Activated T-helper 1 cell treated with anti-CD3 and anti-CD28 coated beads, Interleukin-12 subunit alpha, Interleukin-12 subunit beta, Interleukin-2, Interleukin-4 antibody, amounts not matched to agents 30 ng/mL and 10 ng/mL and 1 ng/mL, durations not matched to agents 14 hours and 24 hours and 36 hours (primary cell): ENCODE measurements at regions of chr11 and their contacts with region 1.

Region 1: DNA sequence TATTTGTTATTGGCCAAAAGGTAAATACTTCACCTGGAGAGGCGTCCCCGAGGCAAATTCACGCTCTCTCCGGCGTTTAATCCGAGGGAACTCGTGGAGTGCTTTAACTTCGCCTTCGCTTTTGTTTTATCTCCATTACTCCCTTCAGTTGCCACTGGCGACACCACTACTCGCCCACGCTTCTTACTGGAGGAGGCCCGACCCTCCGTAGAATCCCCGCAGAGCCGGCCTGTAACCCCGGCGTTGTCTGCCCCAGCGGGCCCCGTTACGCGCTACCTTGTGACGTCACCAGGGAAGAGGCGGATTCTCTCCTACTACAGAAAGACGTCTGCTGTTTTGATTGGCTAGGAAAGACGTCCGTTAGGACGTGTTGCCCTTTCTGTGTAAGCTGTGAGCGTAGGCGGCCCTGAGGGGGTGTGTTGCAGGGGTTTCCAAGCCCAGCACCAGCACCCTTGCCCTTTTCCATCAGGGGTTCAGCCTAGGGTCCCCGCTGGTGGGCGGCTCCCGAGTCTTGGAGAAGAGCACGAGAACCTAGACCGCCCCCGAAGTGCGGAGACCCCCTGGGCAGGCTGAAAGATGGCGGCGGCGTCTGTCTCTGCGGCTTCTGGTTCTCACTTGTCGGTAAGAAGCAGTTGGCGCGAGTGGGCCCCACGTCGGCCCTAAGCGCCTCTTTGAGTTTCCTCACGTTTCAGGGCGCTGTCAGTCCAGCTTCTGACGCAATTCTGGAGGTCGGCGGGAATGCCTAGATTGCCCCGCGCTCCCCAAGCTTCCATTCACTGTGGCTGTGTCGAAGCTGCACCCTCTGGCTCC is at the start of gene CEP57:
- DNase-seq: peak; percentile 93
- H3K4me3 Mint-ChIP-seq: peak within 1 kb of the TSS; percentile 96
- H3K27ac Mint-ChIP-seq: peak within 1 kb of the TSS; percentile 100
- H3K4me1 Mint-ChIP-seq: peaks cover 70% of the 10 kb centered on the region
- H3K27me3 Mint-ChIP-seq: no peaks in the 10 kb centered on the region
- total RNA-seq, gene CEP57: 77.1 and 77.7 TPM in 2 replicates

Region 2: GRCh38 chr11:94134651-94135512 is 1655.4 kb before region 1 on chr11:
- intact Hi-C with region 1: loop called (anchors 5 kb)
- DNase-seq: peak; percentile 9
- H3K4me3 Mint-ChIP-seq: peak overlapping the region; percentile 60
- H3K27ac Mint-ChIP-seq: peak overlapping the region; percentile 45
- H3K4me1 Mint-ChIP-seq: peaks cover 48% of the 10 kb centered on the region
- H3K27me3 Mint-ChIP-seq: no peaks in the 10 kb centered on the region

Region 3: DNA sequence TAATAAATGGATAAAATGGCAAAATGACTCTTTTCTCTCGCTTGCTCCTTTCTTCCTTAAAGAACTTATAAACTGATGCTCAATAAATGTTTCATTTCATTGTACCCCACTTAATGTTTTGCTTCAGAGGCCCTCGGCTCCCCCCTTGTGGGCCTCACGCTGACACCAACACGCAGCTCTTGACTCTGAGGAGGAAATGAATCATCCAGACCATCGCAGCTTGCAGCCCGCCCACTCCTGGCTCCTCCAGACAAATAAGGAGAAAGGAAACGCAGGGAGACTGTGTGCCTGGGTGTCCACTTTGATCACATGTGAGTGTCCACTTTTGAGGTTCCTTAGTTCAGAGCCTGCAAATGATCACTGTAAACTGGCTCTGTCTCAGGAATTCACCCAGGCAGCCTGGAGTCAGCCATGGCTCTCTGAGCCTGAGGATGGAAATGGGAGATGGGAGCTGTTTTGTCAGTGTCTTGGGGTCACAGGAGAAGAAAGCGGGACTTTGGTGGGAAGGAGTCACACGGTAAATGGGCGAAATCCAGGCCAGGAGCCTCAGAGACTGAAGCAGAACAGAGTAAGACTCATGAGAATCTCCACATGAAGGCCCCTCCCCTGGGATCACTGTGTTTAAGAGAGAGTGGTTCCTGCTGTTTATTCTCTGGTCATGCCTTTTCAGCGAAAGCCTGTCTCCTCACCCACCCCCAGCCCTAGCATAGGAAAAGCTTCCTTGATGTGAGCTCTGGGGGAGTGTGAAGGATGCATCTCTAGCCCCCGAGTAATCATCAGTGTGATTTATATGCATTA is 913.5 kb before region 1 on chr11:
- intact Hi-C with region 1: loop called (anchors 1 kb)
- DNase-seq: peak; percentile 38
- H3K4me3 Mint-ChIP-seq: peak overlapping the region; percentile 45
- H3K27ac Mint-ChIP-seq: peak overlapping the region; percentile 78
- H3K4me1 Mint-ChIP-seq: peaks cover 32% of the 10 kb centered on the region
- H3K27me3 Mint-ChIP-seq: no peaks in the 10 kb centered on the region

Region 4: GRCh38 chr11:95150946-95151684 is 639.2 kb before region 1 on chr11:
- intact Hi-C with region 1: loop called (anchors 1 kb)
- DNase-seq: peak; percentile 87
- H3K4me3 Mint-ChIP-seq: peak overlapping the region; percentile 87
- H3K27ac Mint-ChIP-seq: peak overlapping the region; percentile 78
- H3K4me1 Mint-ChIP-seq: peaks cover 46% of the 10 kb centered on the region
- H3K27me3 Mint-ChIP-seq: peaks cover 6% of the 10 kb centered on the region

Region 5: GRCh38 chr11:95923728-95924413 is 133.5 kb after region 1 on chr11 and contains the start of gene MTMR2:
- intact Hi-C with region 1: loop called (anchors 1 kb)
- DNase-seq: peak; percentile 39
- H3K4me3 Mint-ChIP-seq: peak within 1 kb of the TSS; percentile 100
- H3K27ac Mint-ChIP-seq: peak within 1 kb of the TSS; percentile 86
- H3K4me1 Mint-ChIP-seq: peaks cover 31% of the 10 kb centered on the region
- H3K27me3 Mint-ChIP-seq: peaks cover 3% of the 10 kb centered on the region
- total RNA-seq, gene MTMR2: 41.3 and 41.7 TPM in 2 replicates

Region 6: DNA sequence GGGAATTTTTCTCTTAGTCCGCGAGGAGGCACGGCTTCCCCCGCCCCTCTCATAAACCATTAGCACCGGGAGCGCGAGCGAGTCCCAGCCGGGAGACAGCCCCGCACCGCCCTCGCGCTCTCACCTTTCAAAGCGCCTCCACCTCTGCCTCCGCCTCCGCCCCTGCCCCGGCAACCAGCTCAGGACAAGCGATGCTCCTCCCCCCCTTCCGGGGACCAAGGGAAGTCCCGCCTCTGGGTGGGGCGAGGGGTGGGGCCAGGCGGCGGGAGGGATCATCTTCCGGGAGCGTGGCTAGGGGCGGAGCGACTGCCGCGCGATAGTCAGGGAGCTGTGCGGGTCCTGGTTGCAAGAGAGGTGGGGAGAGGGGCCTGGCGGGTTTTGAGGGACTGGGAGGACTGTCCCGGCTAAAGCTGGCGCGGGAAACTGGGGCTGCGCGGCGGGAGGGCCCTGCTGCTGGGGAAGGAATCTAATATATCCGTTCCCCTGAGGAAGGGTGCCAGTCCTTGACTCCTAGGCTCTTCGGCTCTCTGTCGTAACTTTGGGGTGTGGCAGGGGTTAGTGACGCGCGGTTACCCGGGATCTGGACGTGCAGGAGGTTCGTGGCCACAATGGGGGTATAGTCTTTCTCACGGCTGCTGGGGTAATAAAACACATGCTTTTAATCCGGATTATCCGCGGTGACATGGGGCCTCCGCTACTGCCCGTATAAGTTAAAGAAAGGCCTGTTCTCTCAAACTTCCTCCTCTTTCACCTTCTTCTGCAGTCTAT is 599.6 kb after region 1 on chr11 and contains the starts of genes CCDC82 and JRKL:
- intact Hi-C with region 1: loop called (anchors 1 kb)
- DNase-seq: peak; percentile 97
- H3K4me3 Mint-ChIP-seq: peak within 1 kb of the TSS; percentile 95
- H3K27ac Mint-ChIP-seq: peak within 1 kb of the TSS; percentile 85
- H3K4me1 Mint-ChIP-seq: peaks cover 64% of the 10 kb centered on the region
- H3K27me3 Mint-ChIP-seq: no peaks in the 10 kb centered on the region
- total RNA-seq, gene CCDC82: 28.5 and 29.9 TPM in 2 replicates
- total RNA-seq, gene JRKL: 9.6 and 10.2 TPM in 2 replicates